Posterior vena cava (tissue), 2 donors: ENCODE measurements at regions of chr3 and their contacts with region 1.

Region 1: DNA sequence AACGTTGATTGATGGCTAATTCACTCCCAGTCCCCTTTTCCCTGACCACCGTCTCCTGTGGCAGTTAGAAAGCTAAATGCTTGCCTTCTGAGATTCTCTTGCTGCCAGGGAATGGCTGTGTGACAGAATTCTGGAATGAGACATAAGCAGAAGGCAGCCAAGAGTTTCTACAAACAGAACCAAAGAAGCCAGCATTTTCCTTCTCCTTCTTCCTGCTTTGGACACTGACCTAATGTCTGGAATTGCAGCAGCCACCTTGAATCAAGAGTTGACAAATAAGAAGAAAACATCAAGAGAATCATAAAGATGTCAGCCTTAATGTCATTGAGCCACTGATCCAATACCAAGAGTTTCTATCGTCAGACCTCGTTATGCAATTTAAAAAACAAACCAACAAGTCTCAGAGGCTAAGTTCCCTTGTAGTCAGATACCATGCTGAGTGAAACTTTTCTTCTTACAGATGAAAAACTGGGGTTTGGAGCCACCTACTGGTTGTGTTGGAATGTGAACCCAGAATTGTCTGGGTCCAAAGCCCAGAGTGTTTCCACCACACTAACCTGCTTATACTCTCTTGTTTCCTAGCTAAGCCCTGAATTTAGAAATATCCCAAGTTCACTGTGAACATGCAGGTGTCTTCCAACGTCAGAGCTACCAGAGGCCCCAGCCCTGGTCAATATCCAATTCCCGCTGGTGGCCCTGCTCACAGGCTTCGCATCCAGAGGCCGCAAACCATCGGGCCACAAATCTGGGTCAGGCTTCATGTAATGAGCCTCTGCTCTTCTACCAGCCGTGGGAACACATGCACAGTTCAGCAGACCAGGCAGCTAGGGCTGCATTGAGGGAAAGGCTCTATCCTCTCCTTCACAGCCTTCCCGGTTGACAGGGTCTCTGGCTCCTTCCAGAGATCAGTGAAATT is 42.5 kb downstream of the MCF2L2 start:
- DNase-seq: no peak

Region 2: GRCh38 chr3:183122257-183122932 is 263.6 kb before region 1 on chr3:
- intact Hi-C with region 1: loop called in 1 of 2 experiments (anchors 10 kb)
- DNase-seq: no peak

Region 3: DNA sequence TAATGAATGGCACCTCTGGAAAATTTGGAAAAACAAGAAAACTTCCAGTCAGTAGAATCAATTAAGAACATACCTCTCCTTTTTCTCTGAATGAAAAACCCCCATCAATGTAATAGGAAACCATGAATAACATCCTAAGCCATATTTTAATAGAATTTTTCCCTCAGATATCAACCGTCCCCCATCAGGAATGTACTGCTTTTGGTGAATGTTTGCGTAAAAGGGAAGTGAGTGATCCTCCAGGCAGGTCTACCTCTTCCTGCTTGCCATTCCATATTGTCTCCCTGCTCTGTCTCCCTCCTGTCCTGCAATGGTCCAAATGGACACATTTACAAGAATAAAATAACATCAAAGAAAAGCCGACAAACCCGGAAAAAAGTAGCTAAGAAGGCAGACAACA is 254.2 kb before region 1 on chr3:
- intact Hi-C with region 1: loop called (anchors 5 to 10 kb)
- DNase-seq: no peak

Region 4: GRCh38 chr3:183180105-183180783 is 205.7 kb before region 1 on chr3:
- intact Hi-C with region 1: loop called (anchors 1 to 5 kb)
- DNase-seq: no peak

Region 5: GRCh38 chr3:183252973-183253901 is 132.7 kb before region 1 on chr3 and contains the start of gene B3GNT5:
- intact Hi-C with region 1: loop called in 1 of 2 experiments (anchors 10 kb)
- DNase-seq: peak; percentile 91
- total RNA-seq, gene B3GNT5: 5.5 to 11.2 TPM

Region 6: DNA sequence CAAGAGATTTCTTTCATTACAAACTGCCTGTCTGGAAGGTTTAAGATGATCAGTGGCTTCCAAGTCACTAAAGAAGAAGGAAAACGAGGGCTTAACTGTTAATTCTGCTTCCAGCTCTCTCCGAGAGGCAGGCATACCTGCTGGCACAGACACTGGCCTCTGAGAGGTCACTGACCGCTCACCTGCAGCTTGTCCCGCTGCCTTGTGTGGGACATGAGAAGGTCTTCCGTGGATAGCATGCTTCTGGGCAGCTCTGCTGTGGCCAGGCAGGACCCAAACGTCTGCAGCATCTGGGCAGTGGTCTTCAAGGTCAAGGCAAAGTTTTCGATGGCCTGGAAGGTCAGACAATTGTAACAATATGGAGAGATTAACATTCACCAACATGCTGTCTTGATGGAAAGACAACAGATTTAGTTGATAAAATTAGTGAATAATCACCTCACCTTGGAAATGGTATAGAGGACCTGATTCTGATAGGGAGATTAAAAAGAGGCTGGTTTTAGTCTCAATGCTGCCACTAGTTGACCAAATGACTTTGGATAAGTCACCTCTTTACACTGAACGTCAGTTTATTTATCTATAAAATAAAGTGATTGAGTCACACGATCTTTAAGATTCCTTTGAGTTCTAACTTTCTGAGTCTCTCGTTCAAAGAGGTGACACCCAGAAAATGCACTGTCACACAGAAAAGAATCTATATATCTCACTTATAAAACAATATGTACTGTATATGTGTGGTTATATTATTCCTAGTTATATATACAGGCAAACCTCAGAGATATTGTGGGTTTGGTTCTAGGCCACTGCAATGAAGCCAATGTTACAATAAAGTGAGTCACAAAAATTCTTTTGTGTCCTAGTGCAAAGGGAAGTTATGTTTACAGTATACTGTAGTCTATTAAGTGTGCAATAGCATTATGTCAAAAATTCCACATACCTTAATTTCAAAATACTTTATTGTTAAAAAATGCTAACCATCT is 67.8 kb before region 1 on chr3:
- intact Hi-C with region 1: no loop called
- DNase-seq: no peak